Activated naive CD8-positive, alpha-beta T cell treated with anti-CD3 and anti-CD28 coated beads, Interleukin-2, amount 10 ng/mL, durations not matched to agents 7 days and 5 days (primary cell): ENCODE measurements at regions of chr22 and their contacts with region 1.

Region 1: GRCh38 chr22:41925655-41926460 is 748 bp downstream of the TNFRSF13C start:
- DNase-seq: peak; percentile 87
- ATAC-seq: peak; percentile 82
- H3K4me3 Mint-ChIP-seq: peak overlapping the region; percentile 63
- H3K27ac Mint-ChIP-seq: no peak overlapping the region
- H3K4me1 Mint-ChIP-seq: peaks cover 2% of the 10 kb centered on the region
- H3K27me3 Mint-ChIP-seq: peaks cover 25% of the 10 kb centered on the region

Region 2: GRCh38 chr22:41908411-41909309 is 17.2 kb before region 1 on chr22:
- POLR2A ChIA-PET with region 1: interaction called, 10 read pairs
- DNase-seq: no peak
- ATAC-seq: peak; percentile 53
- H3K4me3 Mint-ChIP-seq: peak overlapping the region; percentile 69
- H3K27ac Mint-ChIP-seq: no peak overlapping the region
- H3K4me1 Mint-ChIP-seq: peaks cover 15% of the 10 kb centered on the region
- H3K27me3 Mint-ChIP-seq: peaks cover 33% of the 10 kb centered on the region

Region 3: GRCh38 chr22:41940832-41941765 is 15.2 kb after region 1 on chr22:
- POLR2A ChIA-PET with region 1: interaction called, 15 read pairs
- DNase-seq: peak; percentile 88
- ATAC-seq: peak; percentile 75
- H3K4me3 Mint-ChIP-seq: peak overlapping the region; percentile 18
- H3K27ac Mint-ChIP-seq: peak overlapping the region; percentile 91
- H3K4me1 Mint-ChIP-seq: peaks cover 44% of the 10 kb centered on the region
- H3K27me3 Mint-ChIP-seq: no peaks in the 10 kb centered on the region